H1 (cell line): ENCODE measurements at regions of chr7 and their contacts with region 1.

Region 1: GRCh38 chr7:25098096-25099046 is 26.7 kb downstream of the CYCS start:
- DNase-seq: peak; percentile 15 to 55
- H3K4me3 ChIP-seq: no peak overlapping the region
- H3K27ac ChIP-seq: no peak overlapping the region
- H3K4me1 ChIP-seq: no peaks in the 10 kb centered on the region
- H3K27me3 ChIP-seq: no peaks in the 10 kb centered on the region
- CTCF ChIP-seq: peak; percentile 84 to 88 (median 87)
- EP300 ChIP-seq: no peak
- POLR2A ChIP-seq: no peak
- RAD21 ChIP-seq: peak; percentile 89 to 93

Region 2: GRCh38 chr7:24819916-24820689 is 278.3 kb before region 1 on chr7:
- CTCF ChIA-PET with region 1: interaction called, 80 read pairs
- POLR2A ChIA-PET with region 1: no interaction called
- DNase-seq: peak in 1 of 2 experiments; percentile 82
- H3K4me3 ChIP-seq: no peak overlapping the region
- H3K27ac ChIP-seq: no peak overlapping the region
- H3K4me1 ChIP-seq: no peaks in the 10 kb centered on the region
- H3K27me3 ChIP-seq: no peaks in the 10 kb centered on the region
- CTCF ChIP-seq: peak; percentile 50 to 94 (median 91)
- EP300 ChIP-seq: no peak
- POLR2A ChIP-seq: no peak
- RAD21 ChIP-seq: peak; percentile 92 to 95

Region 3: DNA sequence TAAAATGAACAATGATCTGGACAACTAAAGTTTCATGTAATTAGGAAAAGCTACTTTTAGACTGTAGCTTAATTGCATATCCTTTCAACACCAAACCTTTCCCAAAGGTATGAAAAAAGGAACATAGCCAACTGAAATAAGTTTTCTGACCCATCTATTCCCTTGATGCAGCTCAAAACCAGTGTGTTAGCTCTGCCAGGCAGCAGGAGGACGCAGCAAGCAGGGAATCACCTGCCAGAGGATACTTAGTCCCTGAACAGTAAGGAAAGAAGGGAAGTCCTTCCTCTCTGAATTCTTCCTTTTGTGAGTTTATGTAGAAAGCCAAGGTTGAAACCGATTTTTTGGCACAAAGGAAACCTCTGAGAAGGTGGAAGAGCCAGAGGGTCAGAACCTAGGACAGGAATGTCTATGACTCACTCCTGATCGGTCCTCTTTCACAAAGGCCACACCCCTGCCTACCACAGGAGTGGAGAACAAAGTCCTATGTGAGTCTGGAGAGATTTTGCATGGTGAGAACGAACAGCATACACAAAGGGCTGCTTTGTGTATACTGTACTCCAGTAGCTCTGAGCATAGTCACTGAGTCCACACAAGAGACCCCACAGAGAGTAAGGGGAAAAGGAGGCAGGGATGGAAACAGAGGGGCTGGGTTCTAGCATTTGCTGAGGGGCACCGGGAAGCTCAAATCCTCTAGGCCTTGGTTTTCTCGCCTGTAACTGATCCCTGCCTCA is 272.3 kb before region 1 on chr7:
- CTCF ChIA-PET with region 1: interaction called, 80 read pairs
- POLR2A ChIA-PET with region 1: no interaction called
- DNase-seq: no peak
- H3K4me3 ChIP-seq: no peak overlapping the region
- H3K27ac ChIP-seq: no peak overlapping the region
- H3K4me1 ChIP-seq: peaks cover 0 to 5% (median 0%) of the 10 kb centered on the region in 4 experiments; a peak in 1 of 7 replicates
- H3K27me3 ChIP-seq: no peaks in the 10 kb centered on the region
- CTCF ChIP-seq: no peak
- EP300 ChIP-seq: no peak
- POLR2A ChIP-seq: no peak
- RAD21 ChIP-seq: no peak

Region 4: DNA sequence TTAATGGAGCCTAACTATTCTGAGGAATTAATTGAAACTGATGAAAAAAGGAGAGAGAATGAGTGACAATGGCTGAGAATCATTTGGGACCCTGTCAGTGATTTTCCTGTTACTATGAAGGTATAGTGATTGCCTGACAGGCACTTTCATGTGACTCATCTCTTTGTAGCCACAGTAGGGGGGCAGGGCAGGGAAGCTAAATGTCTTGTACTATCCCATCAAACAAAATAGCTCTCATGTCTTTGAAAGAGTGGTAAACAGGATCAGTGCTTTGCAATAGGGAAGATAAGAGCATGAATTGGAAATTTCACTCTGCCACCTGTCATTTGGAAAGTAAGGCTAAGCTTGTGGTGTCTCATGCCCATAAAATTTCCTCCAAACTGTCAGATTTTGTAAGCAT is 246.6 kb before region 1 on chr7:
- CTCF ChIA-PET with region 1: interaction called, 21 read pairs
- POLR2A ChIA-PET with region 1: no interaction called
- DNase-seq: no peak
- H3K4me3 ChIP-seq: no peak overlapping the region
- H3K27ac ChIP-seq: no peak overlapping the region
- H3K4me1 ChIP-seq: peaks cover 0 to 2% (median 2%) of the 10 kb centered on the region in 4 experiments; a peak in 2 of 7 replicates
- H3K27me3 ChIP-seq: no peaks in the 10 kb centered on the region
- CTCF ChIP-seq: no peak
- EP300 ChIP-seq: no peak
- POLR2A ChIP-seq: no peak
- RAD21 ChIP-seq: no peak

Region 5: GRCh38 chr7:24956021-24956420 is 142.3 kb before region 1 on chr7:
- CTCF ChIA-PET with region 1: no interaction called
- POLR2A ChIA-PET with region 1: no interaction called
- DNase-seq: no peak
- H3K4me3 ChIP-seq: no peak overlapping the region
- H3K27ac ChIP-seq: no peak overlapping the region
- H3K4me1 ChIP-seq: no peaks in the 10 kb centered on the region
- H3K27me3 ChIP-seq: no peaks in the 10 kb centered on the region
- CTCF ChIP-seq: no peak
- EP300 ChIP-seq: no peak
- POLR2A ChIP-seq: no peak
- RAD21 ChIP-seq: no peak

Region 6: DNA sequence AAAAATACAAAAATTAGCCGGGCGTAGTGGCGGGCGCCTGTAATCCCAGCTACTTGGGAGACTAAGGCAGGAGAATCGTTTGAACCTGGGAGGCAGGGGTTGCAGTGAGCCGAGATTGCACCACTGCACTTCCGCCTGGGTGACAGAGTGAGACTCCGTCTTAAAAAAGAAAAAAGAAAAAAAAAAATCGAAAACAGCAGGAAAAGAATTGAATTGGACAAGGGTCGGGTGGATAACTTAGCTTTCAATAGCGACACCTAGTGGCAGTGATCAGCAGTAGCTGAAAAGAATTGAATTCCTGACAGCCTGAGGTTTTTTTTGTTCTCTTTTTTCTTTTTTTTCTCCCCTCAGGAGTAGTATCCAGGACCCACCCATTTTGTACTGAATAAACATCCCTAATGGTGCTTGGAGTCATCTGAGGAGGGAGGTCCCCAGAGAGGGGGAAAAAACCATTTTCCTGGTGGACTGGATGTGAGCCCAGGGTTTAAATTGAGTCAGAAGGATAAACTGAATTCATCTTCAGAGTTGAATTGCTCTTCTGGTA is 28.4 kb before region 1 on chr7:
- CTCF ChIA-PET with region 1: interaction called, 11 read pairs
- POLR2A ChIA-PET with region 1: no interaction called
- DNase-seq: peak in 1 of 2 experiments; percentile 53
- H3K4me3 ChIP-seq: no peak overlapping the region
- H3K27ac ChIP-seq: no peak overlapping the region
- H3K4me1 ChIP-seq: no peaks in the 10 kb centered on the region; a peak in 2 of 7 replicates
- H3K27me3 ChIP-seq: no peaks in the 10 kb centered on the region
- CTCF ChIP-seq: peak in 2 of 3 experiments; percentile 76 to 77; a peak in 3 of 4 replicates
- EP300 ChIP-seq: no peak
- POLR2A ChIP-seq: no peak
- RAD21 ChIP-seq: peak; percentile 81 to 84

Region 7: DNA sequence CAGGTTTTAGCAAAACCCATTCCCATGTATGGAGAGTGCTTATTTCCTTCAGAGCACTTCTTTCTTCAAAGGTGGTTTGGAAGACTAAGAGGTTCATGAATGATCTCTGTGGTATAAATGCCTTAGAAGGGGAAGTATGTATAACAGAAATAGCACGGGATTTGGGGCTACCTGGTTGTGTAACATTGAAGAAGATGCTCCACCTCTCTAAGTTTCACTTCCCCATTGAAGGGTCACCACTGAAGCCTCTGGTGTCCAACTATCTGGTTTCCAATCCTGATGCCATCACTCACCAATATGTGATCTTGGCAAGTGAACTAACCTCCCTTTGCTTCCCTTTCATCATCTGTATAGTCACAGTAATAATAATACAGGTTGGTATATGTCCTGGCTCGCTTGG is 10.5 kb before region 1 on chr7:
- CTCF ChIA-PET with region 1: interaction called, 14 read pairs
- POLR2A ChIA-PET with region 1: no interaction called
- DNase-seq: no peak
- H3K4me3 ChIP-seq: no peak overlapping the region
- H3K27ac ChIP-seq: no peak overlapping the region
- H3K4me1 ChIP-seq: no peaks in the 10 kb centered on the region
- H3K27me3 ChIP-seq: no peaks in the 10 kb centered on the region
- CTCF ChIP-seq: no peak
- EP300 ChIP-seq: no peak
- POLR2A ChIP-seq: no peak
- RAD21 ChIP-seq: no peak